Colonic mucosa (tissue), 4 donors: ENCODE measurements at regions of chr12 and their contacts with region 1.

Region 1: DNA sequence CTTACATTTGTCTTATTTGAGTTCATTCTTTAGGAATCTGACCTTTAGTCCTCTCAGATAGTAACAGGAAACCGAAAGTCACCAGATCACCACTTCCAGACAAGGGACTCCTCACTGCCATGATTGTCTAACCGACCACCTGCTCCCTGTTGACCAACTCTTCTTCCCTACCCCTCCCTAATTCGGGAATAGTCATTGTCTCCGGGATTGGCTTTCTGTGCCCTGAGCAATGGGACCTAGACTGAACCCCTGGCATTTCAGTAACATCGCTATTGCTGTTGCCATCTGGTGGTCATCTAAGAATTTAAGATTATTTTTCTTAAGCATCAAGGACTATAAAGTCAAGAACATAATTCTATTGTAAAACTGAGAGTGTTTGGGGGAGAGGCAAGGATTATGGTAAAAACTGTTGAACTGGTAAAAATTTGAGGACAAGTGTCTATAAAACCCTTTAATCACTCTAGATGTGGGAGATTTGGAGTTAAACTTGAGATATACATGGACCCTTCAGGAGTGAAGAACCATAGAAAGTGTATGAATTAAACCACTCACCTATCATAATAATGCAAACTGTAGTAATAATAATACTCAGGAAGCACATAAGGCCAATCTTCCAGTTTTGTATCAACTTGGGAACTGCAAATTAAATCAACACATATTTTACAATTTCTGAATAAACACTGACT is 6.3 kb downstream of the CLEC2A start:
- DNase-seq: no peak
- H3K4me3 ChIP-seq: peak overlapping the region; percentile 16
- H3K27ac ChIP-seq: no peak overlapping the region
- H3K4me1 ChIP-seq: no peaks in the 10 kb centered on the region
- H3K27me3 ChIP-seq: no peaks in the 10 kb centered on the region
- CTCF ChIP-seq: peak; percentile 25

Region 2: DNA sequence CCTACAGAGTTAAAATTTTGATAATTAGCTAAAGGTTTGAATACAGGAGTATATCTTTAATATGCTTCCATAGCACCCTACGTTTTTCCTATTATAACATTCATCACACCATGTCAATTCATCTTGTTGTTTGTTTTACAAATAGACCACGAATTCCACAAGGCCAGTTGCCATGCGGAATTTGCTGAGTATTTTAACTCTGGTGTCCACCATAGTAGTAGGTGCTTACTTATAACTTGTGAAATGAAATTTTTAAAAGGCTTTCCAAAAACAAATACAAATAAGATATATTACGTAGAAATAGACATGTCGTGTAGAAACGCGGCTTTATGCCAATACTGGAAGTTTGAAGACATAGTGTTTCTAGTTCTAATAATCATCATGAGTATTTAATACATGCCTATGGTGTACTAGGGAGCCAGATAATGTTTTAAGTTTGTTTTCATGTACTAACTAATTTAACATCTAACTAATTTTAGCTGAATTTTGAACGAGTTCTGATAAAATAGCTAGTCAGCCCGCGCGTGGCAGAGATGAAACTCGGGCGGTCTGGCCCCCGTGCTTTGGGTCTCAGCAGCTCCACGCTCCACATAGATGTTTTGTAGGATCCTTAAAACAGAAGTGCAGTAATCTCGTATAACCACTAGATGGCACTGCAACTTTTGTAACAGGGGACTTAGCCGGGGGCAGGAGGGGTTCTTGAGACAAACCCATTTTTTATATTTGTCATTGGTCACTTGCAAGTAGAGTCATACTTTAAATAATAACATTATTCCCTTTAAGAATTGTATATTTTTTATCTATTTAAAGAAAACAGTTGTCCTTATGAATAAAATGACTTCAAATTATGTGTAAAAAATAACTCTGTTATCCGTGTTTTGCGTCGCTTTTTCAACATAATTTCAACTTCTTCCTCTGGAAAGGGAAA is 175.3 kb before region 1 on chr12:
- intact Hi-C with region 1: loop called (anchors 2 kb)
- DNase-seq: peak; percentile 50
- H3K4me3 ChIP-seq: no peak overlapping the region
- H3K27ac ChIP-seq: no peak overlapping the region
- H3K4me1 ChIP-seq: no peaks in the 10 kb centered on the region
- H3K27me3 ChIP-seq: no peaks in the 10 kb centered on the region
- CTCF ChIP-seq: peak; percentile 77

Region 3: GRCh38 chr12:9813821-9814809 is 111.7 kb before region 1 on chr12:
- intact Hi-C with region 1: loop called (anchors 5 kb)
- DNase-seq: peak; percentile 78
- H3K4me3 ChIP-seq: peak overlapping the region; percentile 14
- H3K27ac ChIP-seq: no peak overlapping the region
- H3K4me1 ChIP-seq: no peaks in the 10 kb centered on the region
- H3K27me3 ChIP-seq: no peaks in the 10 kb centered on the region
- CTCF ChIP-seq: peak; percentile 70

Region 4: DNA sequence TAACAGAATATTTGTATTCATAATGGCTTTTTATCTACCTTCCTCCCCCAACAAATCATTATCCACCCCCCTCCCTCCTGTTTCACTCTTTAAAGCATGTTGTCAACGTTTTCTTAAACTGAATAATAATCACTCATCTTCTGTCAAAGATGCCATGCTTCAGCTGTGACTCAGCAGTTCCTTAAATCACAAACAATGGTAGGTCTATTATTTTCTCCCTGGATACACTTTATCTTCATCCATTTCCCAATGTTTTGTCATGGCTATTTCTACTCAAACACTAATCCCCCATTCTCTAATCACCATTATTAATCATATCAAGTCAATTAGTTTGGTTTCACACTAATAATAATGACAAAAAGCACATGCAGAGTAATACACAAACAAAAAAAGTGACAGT is 91.0 kb after region 1 on chr12:
- intact Hi-C with region 1: no loop called
- DNase-seq: no peak
- H3K4me3 ChIP-seq: no peak overlapping the region
- H3K27ac ChIP-seq: no peak overlapping the region
- H3K4me1 ChIP-seq: no peaks in the 10 kb centered on the region
- H3K27me3 ChIP-seq: no peaks in the 10 kb centered on the region
- CTCF ChIP-seq: no peak

Region 5: DNA sequence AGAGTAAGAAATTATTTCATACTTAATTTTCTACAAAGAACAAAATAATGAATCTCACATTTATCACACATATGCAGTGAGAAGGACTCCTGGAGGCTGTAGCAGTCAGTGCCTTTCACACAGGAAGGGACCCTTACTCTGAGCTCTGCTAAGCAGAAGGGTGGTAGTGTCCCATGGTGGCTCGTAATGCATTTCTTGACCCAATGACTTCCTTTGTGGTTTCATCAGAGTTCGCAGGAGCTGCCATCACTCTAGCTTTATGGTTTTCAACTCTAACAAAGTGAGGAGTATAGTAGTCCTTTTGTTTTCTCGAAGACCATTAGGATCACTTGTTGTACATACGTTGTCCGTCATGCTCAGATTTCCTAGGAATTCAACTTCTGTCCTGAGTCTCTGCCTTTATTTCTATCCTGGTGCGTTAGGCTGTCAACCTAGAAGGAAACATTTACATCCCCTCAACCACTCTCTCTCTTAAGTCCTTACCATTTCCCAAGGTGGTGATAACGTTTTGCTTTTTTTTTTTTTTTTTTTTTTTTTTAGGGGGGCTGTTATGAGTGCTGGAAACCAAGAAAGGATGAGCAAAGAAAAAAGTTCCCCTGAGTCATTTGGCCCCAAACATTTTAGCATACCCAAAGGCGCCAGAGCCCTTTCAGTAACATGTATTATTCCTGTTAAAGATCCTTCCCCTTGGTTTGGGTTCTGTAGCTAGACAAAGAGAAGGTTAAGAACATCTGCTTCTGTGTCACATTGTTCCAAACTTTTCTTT is 324.0 kb after region 1 on chr12:
- intact Hi-C with region 1: no loop called
- DNase-seq: no peak
- H3K4me3 ChIP-seq: no peak overlapping the region
- H3K27ac ChIP-seq: no peak overlapping the region
- H3K4me1 ChIP-seq: no peaks in the 10 kb centered on the region
- H3K27me3 ChIP-seq: no peaks in the 10 kb centered on the region
- CTCF ChIP-seq: no peak